ENCODE measurements at regions of chr5 and their contacts with region 1.

Region 1: DNA sequence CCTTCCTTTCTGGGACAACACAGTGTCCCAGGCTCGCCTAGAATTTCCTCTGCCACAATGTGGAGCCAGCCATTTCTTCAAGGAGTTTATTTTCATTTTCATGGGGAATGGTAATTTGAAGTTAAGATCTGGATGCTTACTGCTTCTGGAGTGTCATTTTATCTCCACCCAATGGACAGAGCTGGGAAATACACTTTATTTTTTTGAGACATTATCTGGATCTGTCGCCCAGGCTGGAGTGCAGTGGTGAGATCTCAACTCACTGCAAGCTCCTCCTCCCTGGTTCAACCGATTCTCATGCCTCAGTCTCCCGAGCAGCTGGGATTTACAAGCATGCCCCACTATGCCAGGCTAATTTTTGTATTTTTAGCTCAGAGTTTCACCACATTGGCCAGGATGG is 12.7 kb upstream of the THG1L start:
- DNase-seq: peak; percentile 70
- H3K4me3 ChIP-seq: no peak overlapping the region
- H3K27ac ChIP-seq: no peak overlapping the region
- H3K4me1 ChIP-seq: peaks cover 19% of the 10 kb centered on the region
- CTCF ChIP-seq: peak; percentile 82

Region 2: DNA sequence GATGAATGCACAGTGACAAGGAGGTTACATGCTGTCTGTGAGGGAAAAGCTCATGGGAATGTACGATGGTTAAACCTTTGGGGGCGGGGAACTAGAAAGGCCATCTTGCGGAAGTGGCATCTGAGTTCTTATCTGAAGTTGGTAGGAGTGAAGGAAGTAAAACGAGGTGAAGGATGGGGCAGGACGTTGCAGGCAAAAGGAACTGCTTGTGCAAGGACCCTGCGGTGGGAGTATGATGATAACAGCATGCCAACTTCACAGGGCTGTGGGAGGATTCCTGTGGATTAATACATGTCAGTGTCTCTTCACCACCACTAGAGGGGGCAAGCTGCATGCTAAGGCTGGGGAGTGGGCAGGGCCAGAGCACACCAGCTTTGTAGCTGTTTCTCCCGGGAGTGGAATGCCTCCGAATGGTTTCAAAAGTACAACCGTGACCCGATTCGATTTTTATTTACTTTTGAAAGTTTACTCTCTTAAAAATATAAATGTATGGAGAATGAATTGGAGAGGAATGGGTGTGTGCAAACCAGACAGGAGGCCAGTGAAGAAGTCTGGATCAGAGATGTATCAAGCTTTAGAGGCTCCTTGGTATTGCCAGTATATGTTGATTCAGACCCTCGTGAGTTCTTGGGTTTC is 390.1 kb before region 1 on chr5:
- CTCF ChIA-PET with region 1: no interaction called
- POLR2A ChIA-PET with region 1: no interaction called
- intact Hi-C with region 1: loop called (anchors 1 kb)
- DNase-seq: peak; percentile 73
- H3K4me3 ChIP-seq: no peak overlapping the region
- H3K27ac ChIP-seq: no peak overlapping the region
- H3K4me1 ChIP-seq: no peaks in the 10 kb centered on the region
- CTCF ChIP-seq: peak; percentile 88

Region 3: DNA sequence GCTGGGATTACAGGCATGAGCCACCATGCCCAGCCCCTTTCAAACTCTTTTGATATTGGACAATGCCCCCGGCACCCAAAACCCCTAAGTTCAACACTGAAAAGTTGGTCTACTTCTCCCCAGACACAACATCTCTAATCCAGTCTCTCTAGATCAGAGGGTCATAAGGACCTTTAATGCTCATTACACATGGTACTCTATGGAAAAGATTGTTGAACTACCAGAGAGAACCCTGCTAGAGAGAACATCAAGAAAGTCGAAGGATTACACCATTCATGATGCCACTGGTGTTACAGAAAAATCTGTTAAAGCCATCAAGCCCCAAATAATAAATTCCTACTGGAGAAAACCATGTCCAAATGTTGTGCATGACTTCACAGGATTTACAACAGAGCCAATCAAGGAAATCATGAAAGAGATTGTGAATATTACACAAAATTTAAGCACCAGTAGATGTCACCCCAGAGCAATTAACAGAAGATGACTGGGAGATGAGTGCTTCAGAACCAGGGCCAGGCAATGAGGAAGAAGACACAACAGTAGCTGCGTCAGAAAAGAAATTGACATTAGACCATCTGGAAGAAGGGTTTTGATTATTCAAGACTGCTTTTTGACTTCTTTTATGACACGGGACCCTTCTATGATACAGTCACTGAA is 286.8 kb before region 1 on chr5:
- CTCF ChIA-PET with region 1: interaction called, 5 read pairs
- POLR2A ChIA-PET with region 1: interaction called, 15 read pairs
- intact Hi-C with region 1: loop called (anchors 1 kb)
- DNase-seq: peak; percentile 82
- H3K4me3 ChIP-seq: no peak overlapping the region
- H3K27ac ChIP-seq: no peak overlapping the region
- H3K4me1 ChIP-seq: peaks cover 9% of the 10 kb centered on the region
- CTCF ChIP-seq: peak; percentile 87

Region 4: DNA sequence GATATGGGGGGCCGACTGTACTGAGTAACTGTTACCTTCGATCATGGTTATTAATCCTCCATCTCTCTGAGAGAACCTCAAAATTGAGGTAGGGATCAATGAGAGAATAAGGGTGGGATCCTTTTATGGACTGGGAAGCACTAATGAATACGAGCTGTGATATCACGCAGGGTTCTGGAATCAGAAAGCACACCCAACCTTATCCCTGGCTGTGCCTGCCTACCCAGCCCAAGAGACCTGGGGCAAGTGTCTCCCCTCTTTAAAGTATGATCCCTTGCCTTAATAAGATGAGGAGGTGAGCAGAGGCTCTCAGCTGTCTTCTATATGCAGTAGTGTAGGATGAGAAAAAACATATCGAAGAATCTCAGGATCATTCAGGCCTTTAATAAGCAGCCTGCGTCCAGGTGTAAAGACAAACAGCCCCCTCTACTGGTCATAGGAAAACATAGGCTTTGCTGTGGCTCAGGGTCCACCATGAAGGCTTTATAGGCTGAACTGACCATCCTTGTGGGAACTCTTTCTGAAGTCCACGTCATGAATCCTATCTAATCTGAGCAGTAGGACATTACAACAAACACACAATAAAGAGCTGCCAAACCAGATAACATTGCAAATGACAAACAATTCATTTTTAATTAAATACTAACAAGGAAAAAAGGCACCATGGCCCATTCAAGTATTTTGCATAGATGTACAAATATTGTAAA is 241.7 kb before region 1 on chr5:
- CTCF ChIA-PET with region 1: interaction called, 3 read pairs
- POLR2A ChIA-PET with region 1: no interaction called
- intact Hi-C with region 1: loop called (anchors 2 kb)
- DNase-seq: peak; percentile 79
- H3K4me3 ChIP-seq: no peak overlapping the region
- H3K27ac ChIP-seq: no peak overlapping the region
- H3K4me1 ChIP-seq: peaks cover 21% of the 10 kb centered on the region
- CTCF ChIP-seq: peak; percentile 91

Region 5: GRCh38 chr5:157820593-157821252 is 102.2 kb after region 1 on chr5:
- CTCF ChIA-PET with region 1: no interaction called
- POLR2A ChIA-PET with region 1: no interaction called
- intact Hi-C with region 1: no loop called
- DNase-seq: peak; percentile 83
- H3K4me3 ChIP-seq: peak overlapping the region; percentile 3
- H3K27ac ChIP-seq: peak overlapping the region; percentile 68
- H3K4me1 ChIP-seq: peaks cover 79% of the 10 kb centered on the region
- CTCF ChIP-seq: peak; percentile 97